CD4-positive, alpha-beta T cell (primary cell): ENCODE measurements at regions of chrX and their contacts with region 1.

Region 1: GRCh38 chrX:71254092-71254941 is at the start of gene ZMYM3:
- DNase-seq: peak; percentile 59 to 87 (median 75)
- ATAC-seq: peak; percentile 75
- H3K4me3 ChIP-seq: peak within 1 kb of the TSS; percentile 85
- H3K4me3 Mint-ChIP-seq: peak within 1 kb of the TSS; percentile 95
- H3K27ac ChIP-seq: peak within 1 kb of the TSS; percentile 72 to 84
- H3K27ac Mint-ChIP-seq: peak within 1 kb of the TSS; percentile 93
- H3K4me1 ChIP-seq: peaks cover 27% of the 10 kb centered on the region
- H3K4me1 Mint-ChIP-seq: peaks cover 29% of the 10 kb centered on the region
- H3K27me3 ChIP-seq: no peaks in the 10 kb centered on the region
- H3K27me3 Mint-ChIP-seq: no peaks in the 10 kb centered on the region
- CTCF ChIP-seq: no peak
- total RNA-seq, gene ZMYM3: 16.7 to 17.6 TPM

Region 2: DNA sequence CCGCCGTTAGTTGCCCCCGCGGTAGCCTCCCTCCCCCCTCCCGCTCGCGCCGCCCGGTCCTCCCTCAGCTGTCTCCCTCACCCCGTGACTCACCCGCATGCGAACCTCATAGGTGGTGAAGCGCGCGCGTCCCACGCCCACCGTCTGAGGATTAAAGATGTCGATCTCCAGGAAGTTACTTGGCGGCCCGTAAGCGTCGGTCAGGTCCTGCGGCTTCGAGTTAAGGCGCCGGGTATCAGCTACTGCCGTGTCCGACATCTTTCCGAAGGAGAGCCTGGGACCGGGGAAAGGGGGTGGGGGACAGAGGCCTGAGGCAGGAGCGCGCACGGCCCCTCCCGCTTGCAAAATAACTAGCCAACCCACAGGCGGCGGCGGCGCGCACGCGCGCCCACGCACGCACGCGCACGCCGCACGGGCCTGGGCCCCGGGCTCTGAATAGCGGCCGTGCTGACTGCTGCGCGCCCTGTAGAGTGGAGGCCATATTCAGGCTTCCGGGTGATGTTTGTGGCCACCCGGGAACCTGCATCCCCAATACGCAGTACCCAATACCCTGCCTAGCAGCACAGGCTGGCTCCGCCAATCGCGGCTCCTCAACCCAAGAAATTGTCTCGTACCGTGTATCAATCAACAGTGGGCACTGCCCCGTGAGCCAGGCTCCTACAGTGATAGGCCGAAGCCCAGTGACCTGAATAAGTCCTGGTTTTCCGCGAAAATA is 186.1 kb before region 1 on chrX and contains the start of gene SNX12:
- CTCF ChIA-PET with region 1: no interaction called
- POLR2A ChIA-PET with region 1: interaction called, 4 read pairs
- intact Hi-C with region 1: loop called in 1 of 2 experiments (anchors 10 kb)
- DNase-seq: peak; percentile 73 to 95 (median 84)
- ATAC-seq: peak; percentile 91
- H3K4me3 ChIP-seq: peak within 1 kb of the TSS; percentile 73
- H3K4me3 Mint-ChIP-seq: peak within 1 kb of the TSS; percentile 98
- H3K27ac ChIP-seq: peak within 1 kb of the TSS; percentile 77 to 89
- H3K27ac Mint-ChIP-seq: peak within 1 kb of the TSS; percentile 100
- H3K4me1 ChIP-seq: peaks cover 10% of the 10 kb centered on the region
- H3K4me1 Mint-ChIP-seq: peaks cover 28% of the 10 kb centered on the region
- H3K27me3 ChIP-seq: no peaks in the 10 kb centered on the region
- H3K27me3 Mint-ChIP-seq: no peaks in the 10 kb centered on the region
- CTCF ChIP-seq: no peak
- total RNA-seq, gene SNX12: 20.5 to 22.4 TPM

Region 3: DNA sequence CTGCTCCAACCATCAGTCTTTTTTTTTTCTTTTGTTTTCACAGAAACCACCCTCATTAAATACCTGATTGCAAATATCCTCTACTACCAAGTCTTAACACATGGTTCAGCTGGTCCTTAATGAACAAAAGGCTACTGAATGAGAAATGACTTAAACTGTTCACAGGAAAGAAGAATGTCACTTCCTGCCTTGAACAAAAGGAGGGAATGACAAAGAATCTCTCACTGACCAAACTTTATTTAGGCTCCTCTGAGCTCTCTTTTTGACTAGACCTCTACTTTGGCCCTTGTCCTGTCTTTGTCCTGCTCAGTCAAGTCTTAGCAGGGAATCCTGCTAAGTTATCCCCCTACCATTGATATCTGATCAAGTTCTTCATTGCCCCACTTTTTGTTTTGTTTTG is 63.1 kb before region 1 on chrX:
- CTCF ChIA-PET with region 1: no interaction called
- POLR2A ChIA-PET with region 1: no interaction called
- intact Hi-C with region 1: loop called in 1 of 2 experiments (anchors 5 kb)
- DNase-seq: no peak
- ATAC-seq: no peak
- H3K4me3 ChIP-seq: no peak overlapping the region
- H3K4me3 Mint-ChIP-seq: no peak overlapping the region
- H3K27ac ChIP-seq: no peak overlapping the region
- H3K27ac Mint-ChIP-seq: peak overlapping the region; percentile 67
- H3K4me1 ChIP-seq: peaks cover 16% of the 10 kb centered on the region
- H3K4me1 Mint-ChIP-seq: peaks cover 25% of the 10 kb centered on the region
- H3K27me3 ChIP-seq: no peaks in the 10 kb centered on the region
- H3K27me3 Mint-ChIP-seq: no peaks in the 10 kb centered on the region
- CTCF ChIP-seq: no peak

Region 4: GRCh38 chrX:71283403-71284143 is 29.3 kb after region 1 on chrX and contains the start of gene NONO:
- CTCF ChIA-PET with region 1: interaction called, 9 read pairs
- POLR2A ChIA-PET with region 1: interaction called, 105 read pairs
- intact Hi-C with region 1: loop called (anchors 1 kb)
- DNase-seq: peak; percentile 62 to 97 (median 78)
- ATAC-seq: peak; percentile 86
- H3K4me3 ChIP-seq: peak within 1 kb of the TSS; percentile 89
- H3K4me3 Mint-ChIP-seq: peak within 1 kb of the TSS; percentile 98
- H3K27ac ChIP-seq: peak within 1 kb of the TSS; percentile 85 to 97
- H3K27ac Mint-ChIP-seq: peak within 1 kb of the TSS; percentile 99
- H3K4me1 ChIP-seq: peaks cover 28% of the 10 kb centered on the region
- H3K4me1 Mint-ChIP-seq: peaks cover 34% of the 10 kb centered on the region
- H3K27me3 ChIP-seq: no peaks in the 10 kb centered on the region
- H3K27me3 Mint-ChIP-seq: no peaks in the 10 kb centered on the region
- CTCF ChIP-seq: no peak
- total RNA-seq, gene NONO: 440 to 472 TPM

Region 5: DNA sequence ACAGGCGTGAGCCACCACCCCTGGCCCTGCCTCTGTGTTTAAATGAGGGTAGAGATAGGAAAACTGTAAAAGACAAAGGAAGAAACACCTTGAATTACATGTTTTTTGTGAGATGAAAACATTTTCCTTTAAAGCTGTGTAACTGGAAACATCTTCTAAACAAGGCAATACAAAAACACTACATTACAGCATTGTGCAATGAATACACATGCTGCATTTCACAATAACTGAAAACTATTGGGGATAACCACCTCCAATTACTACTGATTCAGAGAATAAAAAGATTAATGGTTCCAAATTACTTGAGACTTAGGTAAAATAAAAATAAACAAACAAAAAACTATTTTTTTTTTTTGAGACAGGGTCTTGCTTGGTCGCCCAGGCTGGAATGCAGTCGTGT is 271.0 kb after region 1 on chrX:
- CTCF ChIA-PET with region 1: no interaction called
- POLR2A ChIA-PET with region 1: no interaction called
- intact Hi-C with region 1: no loop called
- DNase-seq: no peak
- ATAC-seq: no peak
- H3K4me3 ChIP-seq: no peak overlapping the region
- H3K4me3 Mint-ChIP-seq: no peak overlapping the region
- H3K27ac ChIP-seq: no peak overlapping the region
- H3K27ac Mint-ChIP-seq: no peak overlapping the region
- H3K4me1 ChIP-seq: no peaks in the 10 kb centered on the region
- H3K4me1 Mint-ChIP-seq: no peaks in the 10 kb centered on the region
- H3K27me3 ChIP-seq: no peaks in the 10 kb centered on the region
- H3K27me3 Mint-ChIP-seq: no peaks in the 10 kb centered on the region
- CTCF ChIP-seq: no peak